ENCODE measurements at regions of chrX and their contacts with region 1.

Region 1: GRCh38 chrX:71118032-71118984 is at the start of gene MED12:
- DNase-seq: peak; percentile 69 to 88 (median 78)
- ATAC-seq: peak; percentile 94 to 96
- H3K4me3 Mint-ChIP-seq: peak within 1 kb of the TSS; percentile 82 to 94 (median 87)
- H3K27ac Mint-ChIP-seq: peak within 1 kb of the TSS; percentile 88 to 97 (median 94)
- H3K4me1 Mint-ChIP-seq: peaks cover 7 to 37% (median 30%) of the 10 kb centered on the region in 4 donors
- H3K27me3 Mint-ChIP-seq: no peaks in the 10 kb centered on the region
- polyA plus RNA-seq, gene MED12: 6.6 to 17.0 (median 10.2) TPM

Region 2: DNA sequence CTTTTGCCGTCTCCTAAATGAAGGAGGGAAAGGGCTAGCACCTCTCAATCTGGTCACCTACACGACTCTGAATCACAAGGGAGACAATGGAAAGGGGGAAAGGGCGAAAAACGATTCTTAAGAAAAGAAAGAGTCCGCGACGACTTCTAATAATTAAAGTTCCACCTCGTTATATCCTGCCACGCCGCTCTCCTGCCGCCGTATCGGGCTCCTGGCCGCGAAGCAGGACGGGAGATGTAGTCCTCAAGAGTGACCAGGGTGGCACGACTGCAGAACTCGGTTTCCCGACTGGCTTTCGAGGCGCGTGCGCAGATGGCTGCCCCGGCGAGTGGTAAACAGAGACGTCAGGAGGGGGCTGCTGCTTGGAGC is 22.8 kb before region 1 on chrX and contains the start of gene FOXO4:
- POLR2A ChIA-PET with region 1: interaction called, 134 read pairs
- DNase-seq: peak in 9 of 10 donors; percentile 74 to 94 (median 87)
- ATAC-seq: peak; percentile 83 to 86
- H3K4me3 Mint-ChIP-seq: peak within 1 kb of the TSS; percentile 91 to 96 (median 94)
- H3K27ac Mint-ChIP-seq: peak within 1 kb of the TSS; percentile 84 to 99 (median 96)
- H3K4me1 Mint-ChIP-seq: peaks cover 11 to 40% (median 36%) of the 10 kb centered on the region in 4 donors
- H3K27me3 Mint-ChIP-seq: no peaks in the 10 kb centered on the region
- polyA plus RNA-seq, gene FOXO4: 1.3 to 2.1 (median 1.7) TPM

Region 3: GRCh38 chrX:71103110-71103983 is 15.0 kb before region 1 on chrX:
- POLR2A ChIA-PET with region 1: interaction called, 134 read pairs
- DNase-seq: peak; percentile 28 to 78 (median 50)
- ATAC-seq: peak; percentile 41 to 58
- H3K4me3 Mint-ChIP-seq: peak overlapping the region; percentile 73 to 88 (median 80)
- H3K27ac Mint-ChIP-seq: peak overlapping the region; percentile 90 to 97 (median 94)
- H3K4me1 Mint-ChIP-seq: peaks cover 39 to 90% (median 89%) of the 10 kb centered on the region in 4 donors
- H3K27me3 Mint-ChIP-seq: no peaks in the 10 kb centered on the region

Region 4: GRCh38 chrX:71128915-71129765 is 10.8 kb after region 1 on chrX:
- POLR2A ChIA-PET with region 1: interaction called, 31 read pairs
- DNase-seq: peak; percentile 61 to 86 (median 74)
- ATAC-seq: peak; percentile 94 to 95
- H3K4me3 Mint-ChIP-seq: peak overlapping the region in 7 of 10 donors; percentile 3 to 60 (median 38)
- H3K27ac Mint-ChIP-seq: peak overlapping the region; percentile 70 to 93 (median 84)
- H3K4me1 Mint-ChIP-seq: peaks cover 16 to 26% (median 20%) of the 10 kb centered on the region in 4 donors
- H3K27me3 Mint-ChIP-seq: no peaks in the 10 kb centered on the region

Region 5: DNA sequence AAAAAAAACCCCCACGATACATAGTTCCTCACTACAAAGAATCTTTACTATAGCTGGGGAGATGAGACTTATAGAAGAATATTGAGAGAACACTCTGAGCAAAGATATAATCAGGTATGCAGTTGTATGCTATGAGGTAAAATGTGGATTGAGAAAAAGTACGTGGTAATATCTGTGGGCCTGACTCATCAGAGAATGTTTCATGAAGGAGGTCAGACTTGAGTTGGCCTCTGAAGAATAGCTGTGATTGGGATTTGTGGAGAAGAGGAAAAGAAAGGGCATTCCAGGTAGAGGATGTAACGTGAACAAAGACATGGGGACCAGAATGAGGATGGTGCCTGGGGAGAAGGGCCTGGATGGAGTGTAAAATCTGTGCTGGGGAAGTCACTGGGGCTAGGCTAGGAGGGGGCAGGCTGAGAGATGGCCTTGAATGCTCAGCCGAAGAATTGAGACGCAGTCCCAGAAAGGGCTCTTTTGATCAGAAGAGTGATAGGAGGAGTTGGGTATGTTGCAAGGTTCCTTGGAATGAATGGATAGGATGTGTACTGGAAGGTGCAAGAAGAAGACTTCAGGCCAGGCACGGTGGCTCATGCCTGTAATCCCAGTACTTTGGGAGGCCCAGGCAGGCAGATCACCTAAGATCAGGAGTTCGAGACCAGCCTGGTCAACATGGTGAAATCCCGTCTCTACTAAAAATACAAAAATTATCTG is 20.9 kb after region 1 on chrX:
- POLR2A ChIA-PET with region 1: no interaction called
- DNase-seq: no peak
- ATAC-seq: no peak
- H3K4me3 Mint-ChIP-seq: peak overlapping the region in 2 of 10 donors; percentile 1 to 22
- H3K27ac Mint-ChIP-seq: peak overlapping the region; percentile 1 to 90 (median 62)
- H3K4me1 Mint-ChIP-seq: peaks cover 8 to 18% (median 15%) of the 10 kb centered on the region in 4 donors
- H3K27me3 Mint-ChIP-seq: no peaks in the 10 kb centered on the region